AG04450 (cell line): ENCODE measurements at regions of chr4 and their contacts with region 1.

Region 1: GRCh38 chr4:147731580-147732517 is at the start of gene ARHGAP10:
- DNase-seq: peak; percentile 49
- H3K4me3 ChIP-seq: peak within 1 kb of the TSS; percentile 73
- H3K27ac ChIP-seq: peak within 1 kb of the TSS; percentile 83
- H3K27me3 ChIP-seq: no peaks in the 10 kb centered on the region
- CTCF ChIP-seq: no peak
- polyA plus RNA-seq, gene ARHGAP10: 29.3 and 31.1 TPM in 2 replicates

Region 2: DNA sequence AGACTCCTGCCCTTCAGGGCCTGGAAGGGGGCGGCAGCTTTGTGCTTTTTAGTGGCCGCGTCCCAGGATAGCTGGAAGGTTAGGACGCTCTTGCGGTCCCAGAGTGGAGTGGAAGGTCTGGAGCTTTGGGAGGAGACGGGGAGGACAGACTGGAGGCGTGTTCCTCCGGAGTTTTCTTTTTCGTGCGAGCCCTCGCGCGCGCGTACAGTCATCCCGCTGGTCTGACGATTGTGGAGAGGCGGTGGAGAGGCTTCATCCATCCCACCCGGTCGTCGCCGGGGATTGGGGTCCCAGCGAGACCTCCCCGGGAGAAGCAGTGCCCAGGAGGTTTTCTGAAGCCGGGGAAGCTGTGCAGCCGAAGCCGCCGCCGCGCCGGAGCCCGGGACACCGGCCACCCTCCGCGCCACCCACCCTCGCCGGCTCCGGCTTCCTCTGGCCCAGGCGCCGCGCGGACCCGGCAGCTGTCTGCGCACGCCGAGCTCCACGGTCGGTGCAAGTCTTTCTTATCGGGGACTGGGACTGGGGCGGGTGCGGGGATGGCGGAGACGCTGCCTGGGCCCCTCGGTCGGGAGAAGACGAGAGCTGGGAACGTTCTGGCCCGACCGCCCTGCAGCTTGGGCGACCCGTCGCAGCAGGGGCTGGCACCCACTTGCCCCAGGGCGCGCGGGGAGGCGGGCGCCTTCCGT is 250.8 kb before region 1 on chr4 and contains the start of gene EDNRA:
- CTCF ChIA-PET with region 1: no interaction called
- POLR2A ChIA-PET with region 1: no interaction called
- DNase-seq: no peak
- H3K4me3 ChIP-seq: peak within 1 kb of the TSS; percentile 74
- H3K27ac ChIP-seq: peak within 1 kb of the TSS; percentile 55
- H3K27me3 ChIP-seq: no peaks in the 10 kb centered on the region
- CTCF ChIP-seq: no peak
- polyA plus RNA-seq, gene EDNRA: 28.4 and 38.4 TPM in 2 replicates

Region 3: GRCh38 chr4:147707865-147708672 is 23.8 kb before region 1 on chr4:
- CTCF ChIA-PET with region 1: interaction called, 11 read pairs
- POLR2A ChIA-PET with region 1: interaction called, 9 read pairs
- DNase-seq: no peak
- H3K4me3 ChIP-seq: no peak overlapping the region
- H3K27ac ChIP-seq: no peak overlapping the region
- H3K27me3 ChIP-seq: no peaks in the 10 kb centered on the region
- CTCF ChIP-seq: peak; percentile 86

Region 4: GRCh38 chr4:147755561-147756295 is 23.9 kb after region 1 on chr4:
- CTCF ChIA-PET with region 1: no interaction called
- POLR2A ChIA-PET with region 1: interaction called, 13 read pairs
- DNase-seq: peak; percentile 38
- H3K4me3 ChIP-seq: no peak overlapping the region
- H3K27ac ChIP-seq: peak overlapping the region; percentile 68
- H3K27me3 ChIP-seq: no peaks in the 10 kb centered on the region
- CTCF ChIP-seq: no peak

Region 5: DNA sequence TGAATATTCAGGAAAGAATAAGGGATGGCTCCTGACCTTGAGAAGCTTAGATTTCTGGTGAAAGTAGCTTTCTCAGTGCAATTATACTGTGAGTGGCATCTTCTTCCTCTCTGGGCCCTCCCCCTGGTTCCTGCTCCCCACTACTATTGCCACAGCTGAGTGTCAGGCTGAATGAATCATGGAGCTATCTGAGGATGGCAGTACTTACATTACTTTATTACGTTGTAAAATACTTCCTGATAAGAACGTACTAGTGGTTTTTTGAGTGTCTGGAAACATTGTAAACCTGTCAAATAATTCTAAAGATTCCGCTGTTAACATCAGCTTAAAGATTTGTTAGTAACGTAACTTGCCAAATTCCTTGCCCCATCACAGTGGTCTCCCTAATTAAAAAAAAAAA is 36.3 kb after region 1 on chr4:
- CTCF ChIA-PET with region 1: no interaction called
- POLR2A ChIA-PET with region 1: interaction called, 17 read pairs
- DNase-seq: no peak
- H3K4me3 ChIP-seq: no peak overlapping the region
- H3K27ac ChIP-seq: no peak overlapping the region
- H3K27me3 ChIP-seq: no peaks in the 10 kb centered on the region
- CTCF ChIP-seq: no peak